GM12878 (cell line): ENCODE measurements at regions of chr11 and their contacts with region 1.

Region 1: DNA sequence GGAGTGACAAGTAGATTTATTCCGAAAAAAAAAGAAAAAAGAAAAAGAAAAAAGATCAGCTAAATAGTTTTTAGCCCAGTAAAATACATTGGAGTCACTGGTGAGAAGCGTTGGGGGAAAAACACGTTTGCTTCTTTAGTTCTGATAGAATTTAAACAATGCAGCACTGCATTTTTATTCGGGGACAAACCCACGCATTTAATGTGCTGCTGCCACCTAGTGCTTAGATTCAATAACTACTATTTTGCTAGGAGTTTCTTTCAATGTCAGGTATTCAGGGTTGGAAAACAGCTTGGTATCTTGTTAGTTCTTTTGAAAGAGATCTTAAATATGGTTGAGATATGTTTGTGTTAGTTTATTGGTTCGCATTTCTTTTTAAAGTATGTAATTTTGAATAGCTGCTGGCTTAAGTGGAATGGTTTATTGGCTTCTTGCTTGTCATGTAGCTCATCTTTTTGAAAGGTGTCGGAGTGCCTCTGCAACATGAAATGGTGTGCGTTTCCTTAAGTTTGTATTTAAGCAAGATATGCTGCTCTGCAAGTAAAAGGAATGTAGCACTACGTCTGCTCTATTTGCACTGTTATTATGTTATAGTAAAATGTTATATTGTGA is 41.9 kb downstream of the SVIP start:
- DNase-seq: no peak
- ATAC-seq: peak; percentile 52
- H3K4me3 ChIP-seq: no peak overlapping the region
- H3K27ac ChIP-seq: peak overlapping the region; percentile 63; the same call in 1 of the 2 replicates
- H3K4me1 ChIP-seq: peaks cover 13% of the 10 kb centered on the region
- H3K27me3 ChIP-seq: no peaks in the 10 kb centered on the region
- CTCF ChIP-seq: peak; percentile 60 to 81 (median 72)
- EP300 ChIP-seq: no peak
- POLR2A ChIP-seq: no peak
- RAD21 ChIP-seq: peak; percentile 90

Region 2: DNA sequence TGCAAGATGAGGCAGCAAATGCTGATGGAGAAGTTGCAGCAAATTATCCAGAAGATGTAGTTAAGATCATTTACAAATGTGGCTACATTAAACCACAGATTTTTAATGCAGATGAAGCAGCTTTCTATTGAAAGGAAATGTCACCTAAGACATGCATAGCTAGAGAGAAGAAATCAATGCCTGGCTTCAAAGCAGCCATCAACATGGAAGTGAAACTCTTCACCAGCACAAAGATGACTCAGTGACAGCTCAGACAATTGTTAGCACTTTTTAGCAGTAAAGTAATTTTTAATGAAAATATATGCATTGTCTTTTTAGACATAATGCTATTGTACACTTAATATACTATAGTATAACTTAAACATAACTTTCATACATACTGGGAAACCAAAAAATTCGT is 233.4 kb before region 1 on chr11:
- CTCF ChIA-PET with region 1: interaction called, 12 read pairs
- POLR2A ChIA-PET with region 1: no interaction called
- RAD21 ChIA-PET with region 1: no interaction called
- SMC1A ChIA-PET with region 1: no interaction called
- in situ Hi-C with region 1: no loop called
- intact Hi-C with region 1: loop called (anchors 5 kb)
- DNase-seq: peak; percentile 4
- ATAC-seq: peak; percentile 98
- H3K4me3 ChIP-seq: no peak overlapping the region
- H3K27ac ChIP-seq: no peak overlapping the region
- H3K4me1 ChIP-seq: no peaks in the 10 kb centered on the region
- H3K27me3 ChIP-seq: no peaks in the 10 kb centered on the region
- CTCF ChIP-seq: no peak
- EP300 ChIP-seq: peak in 1 of 2 experiments; percentile 43; a peak in 1 of 4 replicates
- POLR2A ChIP-seq: no peak
- RAD21 ChIP-seq: no peak

Region 3: GRCh38 chr11:22666688-22667439 is 120.8 kb before region 1 on chr11:
- CTCF ChIA-PET with region 1: interaction called, 135 read pairs
- POLR2A ChIA-PET with region 1: interaction called, 8 read pairs
- RAD21 ChIA-PET with region 1: interaction called, 103 read pairs
- SMC1A ChIA-PET with region 1: interaction called, 251 read pairs
- in situ Hi-C with region 1: loop called (anchors 10 kb)
- intact Hi-C with region 1: loop called (anchors 1 kb)
- DNase-seq: no peak
- ATAC-seq: peak; percentile 72
- H3K4me3 ChIP-seq: peak overlapping the region; percentile 59
- H3K27ac ChIP-seq: peak overlapping the region; percentile 77
- H3K4me1 ChIP-seq: no peaks in the 10 kb centered on the region
- H3K27me3 ChIP-seq: no peaks in the 10 kb centered on the region
- CTCF ChIP-seq: peak in 1 of 3 experiments; percentile 5; a peak in 1 of 6 replicates
- EP300 ChIP-seq: no peak
- POLR2A ChIP-seq: peak; percentile 65; the same call in 1 of the 2 replicates
- RAD21 ChIP-seq: no peak

Region 4: GRCh38 chr11:22703040-22703439 is 84.6 kb before region 1 on chr11:
- CTCF ChIA-PET with region 1: interaction called, 4 read pairs
- POLR2A ChIA-PET with region 1: interaction called, 7 read pairs
- RAD21 ChIA-PET with region 1: interaction called, 10 read pairs
- SMC1A ChIA-PET with region 1: interaction called, 4 read pairs
- in situ Hi-C with region 1: no loop called
- intact Hi-C with region 1: no loop called
- DNase-seq: peak; percentile 21
- ATAC-seq: peak; percentile 76
- H3K4me3 ChIP-seq: no peak overlapping the region
- H3K27ac ChIP-seq: no peak overlapping the region
- H3K4me1 ChIP-seq: no peaks in the 10 kb centered on the region
- H3K27me3 ChIP-seq: no peaks in the 10 kb centered on the region
- CTCF ChIP-seq: no peak
- EP300 ChIP-seq: peak in 1 of 2 experiments; percentile 43; a peak in 1 of 4 replicates
- POLR2A ChIP-seq: no peak
- RAD21 ChIP-seq: no peak

Region 5: DNA sequence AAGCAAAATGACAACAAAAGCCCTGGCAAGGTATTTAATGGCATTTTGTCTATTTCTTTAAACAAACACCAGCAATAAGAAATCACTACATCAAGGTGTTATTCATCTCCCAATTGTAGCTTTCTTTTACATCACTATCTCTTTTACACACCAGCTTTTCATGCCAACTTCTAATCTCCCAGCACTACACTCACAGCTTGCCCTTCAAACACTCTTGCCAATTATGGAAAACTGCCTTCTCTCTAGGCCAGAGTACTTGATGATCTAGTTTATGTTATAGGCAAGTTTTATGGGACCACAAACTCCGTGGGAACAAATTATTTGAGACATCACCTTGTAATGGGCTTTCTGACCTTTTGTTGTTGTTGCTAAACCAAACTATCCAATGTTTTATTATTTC is 19.4 kb before region 1 on chr11:
- CTCF ChIA-PET with region 1: interaction called, 77 read pairs
- POLR2A ChIA-PET with region 1: interaction called, 3 read pairs
- RAD21 ChIA-PET with region 1: interaction called, 7 read pairs
- SMC1A ChIA-PET with region 1: interaction called, 19 read pairs
- in situ Hi-C with region 1: no loop called
- intact Hi-C with region 1: no loop called
- DNase-seq: no peak
- ATAC-seq: no peak
- H3K4me3 ChIP-seq: no peak overlapping the region
- H3K27ac ChIP-seq: no peak overlapping the region
- H3K4me1 ChIP-seq: no peaks in the 10 kb centered on the region
- H3K27me3 ChIP-seq: no peaks in the 10 kb centered on the region
- CTCF ChIP-seq: no peak
- EP300 ChIP-seq: no peak
- POLR2A ChIP-seq: no peak
- RAD21 ChIP-seq: no peak

Region 6: GRCh38 chr11:22829231-22830081 is 41.8 kb after region 1 on chr11 and contains the start of gene SVIP:
- CTCF ChIA-PET with region 1: interaction called, 42 read pairs
- POLR2A ChIA-PET with region 1: interaction called, 8 read pairs
- RAD21 ChIA-PET with region 1: interaction called, 39 read pairs
- SMC1A ChIA-PET with region 1: interaction called, 30 read pairs
- in situ Hi-C with region 1: no loop called
- intact Hi-C with region 1: no loop called
- DNase-seq: peak; percentile 69
- ATAC-seq: peak; percentile 94
- H3K4me3 ChIP-seq: peak within 1 kb of the TSS; percentile 87
- H3K27ac ChIP-seq: peak within 1 kb of the TSS; percentile 59
- H3K4me1 ChIP-seq: no peaks in the 10 kb centered on the region
- H3K27me3 ChIP-seq: no peaks in the 10 kb centered on the region
- CTCF ChIP-seq: peak; percentile 76 to 92 (median 89)
- EP300 ChIP-seq: no peak
- POLR2A ChIP-seq: peak; percentile 91
- RAD21 ChIP-seq: peak; percentile 56
- polyA plus RNA-seq, gene SVIP: 59.0 to 78.0 TPM

Region 7: DNA sequence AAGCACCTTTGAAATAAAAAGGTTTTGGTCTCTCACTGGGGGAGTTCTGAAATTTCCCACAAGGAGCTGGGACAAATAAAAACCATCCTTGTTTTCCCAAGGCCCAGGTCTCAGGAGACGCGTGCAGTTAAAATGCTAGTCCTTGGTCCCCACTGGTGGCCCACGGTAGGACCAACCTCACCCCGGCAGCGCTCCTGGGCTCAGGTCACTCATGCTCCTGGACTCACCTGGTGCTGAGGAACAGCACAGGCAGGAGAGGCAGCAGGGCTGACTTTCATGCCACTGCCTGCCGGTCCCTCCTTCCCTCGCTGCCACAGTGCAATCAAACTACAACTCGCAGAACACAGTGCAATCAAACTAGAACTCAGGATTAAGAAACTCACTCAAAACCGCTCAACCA is 429.4 kb after region 1 on chr11:
- CTCF ChIA-PET with region 1: no interaction called
- POLR2A ChIA-PET with region 1: no interaction called
- RAD21 ChIA-PET with region 1: no interaction called
- SMC1A ChIA-PET with region 1: no interaction called
- in situ Hi-C with region 1: no loop called
- intact Hi-C with region 1: no loop called
- DNase-seq: no peak
- ATAC-seq: no peak
- H3K4me3 ChIP-seq: no peak overlapping the region
- H3K27ac ChIP-seq: no peak overlapping the region
- H3K4me1 ChIP-seq: no peaks in the 10 kb centered on the region
- H3K27me3 ChIP-seq: no peaks in the 10 kb centered on the region
- CTCF ChIP-seq: no peak
- EP300 ChIP-seq: no peak
- POLR2A ChIP-seq: no peak
- RAD21 ChIP-seq: no peak